ENCODE measurements at regions of chr5 and their contacts with region 1.

Region 1: DNA sequence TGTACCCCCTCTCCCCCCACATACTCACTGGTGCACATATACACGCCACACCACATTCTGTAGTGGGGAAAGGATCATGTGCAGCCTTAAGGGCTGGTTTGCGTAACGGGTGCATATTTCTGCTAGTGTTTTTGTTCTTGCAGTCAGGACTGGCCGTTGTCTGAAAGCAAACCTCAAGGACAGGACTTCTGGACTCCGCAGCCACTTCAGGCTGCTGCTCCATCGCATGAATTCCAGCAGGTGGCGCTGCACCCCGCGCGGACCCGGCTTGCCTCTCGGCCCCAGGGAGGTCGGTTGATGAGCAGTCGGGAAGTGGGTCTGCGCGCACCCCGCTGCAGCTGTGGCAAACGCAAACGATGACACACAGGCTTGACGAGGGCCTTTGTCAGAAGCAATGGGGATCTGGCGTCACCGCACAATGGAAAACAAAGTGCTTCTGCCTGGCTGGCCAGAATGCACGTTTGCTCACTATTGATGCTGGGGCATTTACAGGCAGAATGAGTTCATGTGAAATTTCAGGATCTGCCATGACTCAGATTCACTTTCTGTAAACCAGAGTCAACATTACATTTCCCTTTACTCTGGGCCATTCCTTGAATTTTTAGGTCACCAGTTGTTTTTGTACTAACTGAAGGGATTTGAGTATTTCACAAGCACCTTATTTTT is 36.3 kb upstream of the GLRX start:
- DNase-seq: peak; percentile 94
- ATAC-seq: peak; percentile 84

Region 2: DNA sequence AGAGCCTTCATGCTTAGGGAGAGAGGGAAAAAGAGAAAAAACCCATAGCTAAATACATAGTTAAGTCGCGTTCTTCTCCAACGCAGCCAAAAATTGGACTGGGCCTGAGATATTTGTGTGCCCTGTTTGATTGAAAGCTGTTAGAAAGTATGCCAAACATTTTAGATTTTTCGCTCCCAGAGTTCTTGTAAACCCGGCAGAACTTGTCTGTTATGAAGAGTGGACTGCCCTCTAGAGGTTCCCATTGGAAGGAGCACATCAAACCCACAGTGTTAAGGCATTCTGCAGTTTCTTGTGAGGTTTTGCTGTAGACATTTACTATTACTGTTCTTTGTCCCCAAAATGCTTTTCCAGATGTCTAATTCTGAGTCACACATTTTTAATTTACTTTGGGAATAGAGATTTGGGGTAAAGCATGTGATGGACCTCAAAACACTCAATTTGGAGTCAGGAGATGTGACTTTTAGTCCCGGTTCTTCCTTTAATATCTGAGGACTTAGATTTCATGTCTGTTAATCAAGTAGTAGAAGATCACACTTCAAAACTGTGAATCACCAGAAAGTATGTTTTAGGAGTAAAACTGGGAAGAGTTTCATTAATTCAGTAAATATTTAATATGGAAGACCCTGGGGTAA is 477.7 kb after region 1 on chr5:
- intact Hi-C with region 1: loop called (anchors 5 kb)
- DNase-seq: peak; percentile 79
- ATAC-seq: peak; percentile 90